Heart left ventricle (tissue), 16 donors: ENCODE measurements at regions of chr4 and their contacts with region 1.

Region 1: DNA sequence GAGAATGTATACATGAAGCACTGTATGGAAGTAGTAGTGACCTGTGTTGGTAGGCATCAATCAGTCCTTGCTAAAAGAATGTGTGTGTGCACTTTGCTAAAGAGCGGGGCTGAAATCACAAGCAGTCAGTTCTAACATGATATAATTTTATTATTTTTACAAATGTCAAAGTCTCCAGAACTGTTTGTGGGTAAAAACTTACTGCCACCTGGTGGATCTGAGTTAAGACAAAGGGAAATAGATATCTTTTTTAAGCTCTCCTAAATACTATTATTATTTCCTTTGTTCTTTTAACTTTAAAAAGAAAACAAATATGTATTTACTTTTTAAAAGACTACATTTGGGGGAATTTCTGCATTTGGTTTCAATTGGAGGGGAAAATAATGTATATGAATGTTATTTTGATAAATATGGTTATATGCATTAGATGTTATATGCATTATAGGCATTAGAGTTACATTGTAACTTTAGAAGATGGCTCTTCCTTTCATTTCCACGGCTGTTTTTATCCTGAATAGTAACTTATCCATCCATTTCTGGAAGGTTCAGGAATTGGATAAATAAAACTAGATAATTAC is 7.8 kb upstream of the CLOCK start:
- DNase-seq: no peak
- ATAC-seq: no peak
- H3K4me3 ChIP-seq: no peak overlapping the region
- H3K27ac ChIP-seq: no peak overlapping the region
- H3K4me1 ChIP-seq: peaks cover 0 to 10% (median 0%) of the 10 kb centered on the region in 12 donors
- H3K27me3 ChIP-seq: no peaks in the 10 kb centered on the region
- CTCF ChIP-seq: peak; percentile 12 to 58 (median 45)
- POLR2A ChIP-seq: no peak

Region 2: DNA sequence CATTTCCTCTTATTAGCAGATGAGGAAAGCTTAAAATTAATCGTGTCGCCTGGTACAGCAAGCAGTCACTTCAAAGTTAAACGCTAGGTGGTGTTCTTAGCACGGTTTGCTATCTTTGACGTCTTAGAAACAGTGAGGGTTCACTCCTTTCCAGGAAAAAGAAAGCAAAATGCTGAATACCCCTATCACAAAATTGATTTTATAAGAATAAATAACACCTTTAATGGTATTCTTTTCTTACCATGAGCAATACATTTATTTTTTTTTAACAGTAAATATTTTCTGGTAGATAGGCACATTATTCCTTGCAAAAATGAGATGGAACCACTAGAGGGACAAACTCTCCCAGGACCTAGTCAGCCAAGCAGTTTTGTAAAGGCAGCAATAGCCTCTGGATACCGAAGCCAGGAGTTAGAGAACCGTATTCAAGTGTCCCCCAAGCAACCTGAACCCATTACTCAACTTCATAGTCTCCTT is 583.0 kb before region 1 on chr4:
- intact Hi-C with region 1: loop called in 3 of 10 experiments (anchors 10 kb)
- DNase-seq: no peak
- ATAC-seq: peak in 3 of 4 donors; percentile 65 to 85 (median 69)
- H3K4me3 ChIP-seq: no peak overlapping the region
- H3K27ac ChIP-seq: no peak overlapping the region
- H3K4me1 ChIP-seq: peaks cover 0 to 3% (median 0%) of the 10 kb centered on the region in 12 donors
- H3K27me3 ChIP-seq: no peaks in the 10 kb centered on the region
- CTCF ChIP-seq: peak; percentile 58 to 82 (median 74)
- POLR2A ChIP-seq: no peak

Region 3: GRCh38 chr4:54999003-54999402 is 555.5 kb before region 1 on chr4:
- intact Hi-C with region 1: loop called in 1 of 10 experiments (anchors 10 kb)
- DNase-seq: no peak
- ATAC-seq: peak in 1 of 4 donors; percentile 74
- H3K4me3 ChIP-seq: no peak overlapping the region
- H3K27ac ChIP-seq: no peak overlapping the region
- H3K4me1 ChIP-seq: peaks cover 0 to 7% (median 2%) of the 10 kb centered on the region in 12 donors
- H3K27me3 ChIP-seq: no peaks in the 10 kb centered on the region
- CTCF ChIP-seq: peak; percentile 25 to 70 (median 58)
- POLR2A ChIP-seq: no peak

Region 4: GRCh38 chr4:55345980-55346850 is 208.3 kb before region 1 on chr4 and contains the start of gene SRD5A3:
- intact Hi-C with region 1: loop called in 7 of 10 experiments (anchors 5 to 10 kb)
- DNase-seq: peak; percentile 86 to 94 (median 88)
- ATAC-seq: peak; percentile 94 to 98 (median 96)
- H3K4me3 ChIP-seq: peak within 1 kb of the TSS; percentile 48 to 97 (median 80)
- H3K27ac ChIP-seq: peak within 1 kb of the TSS; percentile 89 to 100 (median 98)
- H3K4me1 ChIP-seq: peaks cover 4 to 31% (median 16%) of the 10 kb centered on the region in 12 donors
- H3K27me3 ChIP-seq: no peaks in the 10 kb centered on the region
- CTCF ChIP-seq: peak; percentile 90 to 99 (median 98)
- POLR2A ChIP-seq: peak in 1 of 2 donors; percentile 72
- total RNA-seq, gene SRD5A3: 4.5 to 16.8 (median 7.8) TPM

Region 5: DNA sequence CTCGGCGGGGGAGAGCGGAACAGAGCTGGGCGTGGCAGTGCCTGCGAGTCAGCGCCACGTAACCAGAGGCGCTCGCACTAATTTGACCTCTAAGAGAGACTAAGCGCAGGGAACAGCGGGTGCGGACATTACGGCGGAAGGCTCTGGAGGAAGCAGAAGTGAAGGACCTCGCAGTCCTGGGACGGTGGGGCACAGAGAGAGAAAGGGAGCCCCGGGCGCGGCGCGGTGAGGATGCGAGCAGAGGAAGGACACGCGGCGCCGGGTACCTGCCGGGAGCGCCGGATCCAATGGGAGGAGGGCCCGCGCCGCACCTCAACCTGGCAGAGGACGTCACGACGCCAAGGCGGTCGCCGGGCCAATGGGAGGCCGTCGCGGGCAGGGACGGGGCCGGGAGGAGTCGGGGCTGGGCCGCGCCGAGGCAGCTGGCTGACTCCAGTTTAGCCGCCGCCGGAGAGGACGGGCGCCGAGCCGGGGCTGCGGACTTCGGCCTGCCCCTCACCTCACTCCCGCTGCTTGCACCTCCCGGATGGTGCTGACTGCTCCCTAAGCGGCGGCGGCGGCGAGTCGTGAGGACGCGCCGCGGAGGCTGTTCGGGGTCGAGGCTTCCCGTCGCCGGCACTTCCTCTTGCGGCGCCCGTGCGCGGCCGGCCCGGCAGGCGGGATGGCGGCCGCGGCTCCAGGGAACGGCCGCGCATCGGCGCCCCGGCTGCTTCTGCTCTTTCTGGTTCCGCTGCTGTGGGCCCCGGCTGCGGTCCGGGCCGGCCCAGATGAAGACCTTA is 158.8 kb before region 1 on chr4 and contains the start of gene TMEM165:
- intact Hi-C with region 1: loop called in 5 of 10 experiments (anchors 5 to 10 kb)
- DNase-seq: peak; percentile 93 to 96 (median 93)
- ATAC-seq: peak; percentile 94 to 98 (median 98)
- H3K4me3 ChIP-seq: peak within 1 kb of the TSS; percentile 63 to 100 (median 94)
- H3K27ac ChIP-seq: peak within 1 kb of the TSS; percentile 96 to 100 (median 98)
- H3K4me1 ChIP-seq: peaks cover 0 to 42% (median 33%) of the 10 kb centered on the region in 12 donors
- H3K27me3 ChIP-seq: no peaks in the 10 kb centered on the region
- CTCF ChIP-seq: peak in 1 of 12 donors; percentile 7
- POLR2A ChIP-seq: peak; percentile 68 to 97
- total RNA-seq, gene TMEM165: 28.2 to 78.3 (median 53.9) TPM

Region 6: GRCh38 chr4:55458164-55458563 is 96.4 kb before region 1 on chr4:
- intact Hi-C with region 1: loop called in 2 of 10 experiments (anchors 10 kb)
- DNase-seq: no peak
- ATAC-seq: no peak
- H3K4me3 ChIP-seq: no peak overlapping the region
- H3K27ac ChIP-seq: no peak overlapping the region
- H3K4me1 ChIP-seq: no peaks in the 10 kb centered on the region
- H3K27me3 ChIP-seq: no peaks in the 10 kb centered on the region
- CTCF ChIP-seq: no peak
- POLR2A ChIP-seq: no peak